Activated CD8-positive, alpha-beta T cell treated with anti-CD3 and anti-CD28 coated beads, Interleukin-2, amount 10 ng/mL, durations not matched to agents 7 days and 5 days (primary cell): ENCODE measurements at regions of chr2 and their contacts with region 1.

Region 1: DNA sequence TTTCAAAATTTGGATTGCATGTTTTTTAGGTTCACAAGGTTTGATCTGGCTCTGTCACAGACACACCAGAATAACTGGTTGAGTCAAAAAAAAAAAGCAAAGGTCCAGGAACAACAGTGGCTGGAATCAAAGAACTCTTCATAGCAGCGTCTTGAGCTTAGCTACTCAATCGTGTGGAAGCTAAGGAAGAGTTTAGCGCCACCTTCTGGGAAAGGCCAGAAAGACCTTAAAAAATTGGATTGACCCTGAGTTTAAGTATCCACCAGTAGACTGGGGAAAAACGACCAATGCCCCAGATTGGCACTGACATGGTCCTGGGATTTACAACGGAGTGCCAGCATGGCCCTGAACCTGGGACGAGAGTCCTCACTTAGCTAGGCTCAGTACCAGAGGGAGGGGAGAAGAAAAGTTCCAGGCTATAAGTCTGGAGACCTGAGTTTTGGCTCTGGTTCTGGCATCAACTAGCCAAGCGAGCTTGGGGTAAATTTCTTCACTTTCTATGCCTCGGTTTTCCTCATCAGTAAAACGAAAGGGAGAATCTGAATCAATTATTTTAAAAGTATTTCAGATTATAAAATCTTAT is 71.1 kb upstream of the TFCP2L1 start:
- DNase-seq: peak; percentile 39
- ATAC-seq: peak; percentile 70
- H3K4me3 Mint-ChIP-seq: no peak overlapping the region
- H3K27ac Mint-ChIP-seq: no peak overlapping the region
- H3K4me1 Mint-ChIP-seq: peaks cover 6% of the 10 kb centered on the region
- H3K27me3 Mint-ChIP-seq: no peaks in the 10 kb centered on the region

Region 2: GRCh38 chr2:121088251-121089165 is 267.6 kb before region 1 on chr2:
- CTCF ChIA-PET with region 1: interaction called, 34 read pairs
- POLR2A ChIA-PET with region 1: interaction called, 3 read pairs
- DNase-seq: no peak
- ATAC-seq: no peak
- H3K4me3 Mint-ChIP-seq: no peak overlapping the region
- H3K27ac Mint-ChIP-seq: no peak overlapping the region
- H3K4me1 Mint-ChIP-seq: no peaks in the 10 kb centered on the region
- H3K27me3 Mint-ChIP-seq: peaks cover 2% of the 10 kb centered on the region

Region 3: GRCh38 chr2:121128754-121129659 is 227.1 kb before region 1 on chr2:
- CTCF ChIA-PET with region 1: interaction called, 28 read pairs
- POLR2A ChIA-PET with region 1: no interaction called
- DNase-seq: peak; percentile 40
- ATAC-seq: no peak
- H3K4me3 Mint-ChIP-seq: no peak overlapping the region
- H3K27ac Mint-ChIP-seq: no peak overlapping the region
- H3K4me1 Mint-ChIP-seq: no peaks in the 10 kb centered on the region
- H3K27me3 Mint-ChIP-seq: no peaks in the 10 kb centered on the region

Region 4: GRCh38 chr2:121345887-121346286 is 10.3 kb before region 1 on chr2:
- CTCF ChIA-PET with region 1: interaction called, 20 read pairs
- POLR2A ChIA-PET with region 1: interaction called, 3 read pairs
- DNase-seq: no peak
- ATAC-seq: no peak
- H3K4me3 Mint-ChIP-seq: no peak overlapping the region
- H3K27ac Mint-ChIP-seq: no peak overlapping the region
- H3K4me1 Mint-ChIP-seq: no peaks in the 10 kb centered on the region
- H3K27me3 Mint-ChIP-seq: no peaks in the 10 kb centered on the region